WTC11 (cell line): ENCODE measurements at regions of chr19 and their contacts with region 1.

Region 1: GRCh38 chr19:49640113-49640898 is at the start of gene RRAS:
- DNase-seq: peak; percentile 100
- ATAC-seq: peak; percentile 76
- H3K4me3 Mint-ChIP-seq: peak within 1 kb of the TSS; percentile 99
- H3K27ac Mint-ChIP-seq: peak within 1 kb of the TSS; percentile 99
- H3K4me1 Mint-ChIP-seq: peaks cover 62% of the 10 kb centered on the region
- H3K27me3 Mint-ChIP-seq: peaks cover 32% of the 10 kb centered on the region
- CTCF ChIP-seq: no peak
- total RNA-seq, gene RRAS: 11.4 to 17.9 TPM (median 15.7 TPM) in 3 replicates

Region 2: GRCh38 chr19:49590071-49590970 is 50.0 kb before region 1 on chr19:
- CTCF ChIA-PET with region 1: interaction called, 6 read pairs
- POLR2A ChIA-PET with region 1: interaction called, 11 read pairs
- DNase-seq: peak; percentile 99
- ATAC-seq: peak; percentile 84
- H3K4me3 Mint-ChIP-seq: peak overlapping the region; percentile 95
- H3K27ac Mint-ChIP-seq: peak overlapping the region; percentile 92
- H3K4me1 Mint-ChIP-seq: peaks cover 12% of the 10 kb centered on the region
- H3K27me3 Mint-ChIP-seq: no peaks in the 10 kb centered on the region
- CTCF ChIP-seq: no peak

Region 3: GRCh38 chr19:49665351-49666119 is 25.2 kb after region 1 on chr19 and contains the starts of genes BCL2L12 and IRF3:
- CTCF ChIA-PET with region 1: interaction called, 108 read pairs
- POLR2A ChIA-PET with region 1: interaction called, 11 read pairs
- DNase-seq: peak; percentile 97
- ATAC-seq: peak; percentile 70
- H3K4me3 Mint-ChIP-seq: peak within 1 kb of the TSS; percentile 98
- H3K27ac Mint-ChIP-seq: peak within 1 kb of the TSS; percentile 98
- H3K4me1 Mint-ChIP-seq: peaks cover 12% of the 10 kb centered on the region
- H3K27me3 Mint-ChIP-seq: no peaks in the 10 kb centered on the region; the same call in 1 of the 2 replicates
- CTCF ChIP-seq: no peak
- total RNA-seq, gene BCL2L12: 139 to 146 TPM (median 140 TPM) in 3 replicates
- total RNA-seq, gene IRF3: 149 to 165 TPM (median 154 TPM) in 3 replicates